ENCODE measurements at regions of chr11 and their contacts with region 1.

Region 1: DNA sequence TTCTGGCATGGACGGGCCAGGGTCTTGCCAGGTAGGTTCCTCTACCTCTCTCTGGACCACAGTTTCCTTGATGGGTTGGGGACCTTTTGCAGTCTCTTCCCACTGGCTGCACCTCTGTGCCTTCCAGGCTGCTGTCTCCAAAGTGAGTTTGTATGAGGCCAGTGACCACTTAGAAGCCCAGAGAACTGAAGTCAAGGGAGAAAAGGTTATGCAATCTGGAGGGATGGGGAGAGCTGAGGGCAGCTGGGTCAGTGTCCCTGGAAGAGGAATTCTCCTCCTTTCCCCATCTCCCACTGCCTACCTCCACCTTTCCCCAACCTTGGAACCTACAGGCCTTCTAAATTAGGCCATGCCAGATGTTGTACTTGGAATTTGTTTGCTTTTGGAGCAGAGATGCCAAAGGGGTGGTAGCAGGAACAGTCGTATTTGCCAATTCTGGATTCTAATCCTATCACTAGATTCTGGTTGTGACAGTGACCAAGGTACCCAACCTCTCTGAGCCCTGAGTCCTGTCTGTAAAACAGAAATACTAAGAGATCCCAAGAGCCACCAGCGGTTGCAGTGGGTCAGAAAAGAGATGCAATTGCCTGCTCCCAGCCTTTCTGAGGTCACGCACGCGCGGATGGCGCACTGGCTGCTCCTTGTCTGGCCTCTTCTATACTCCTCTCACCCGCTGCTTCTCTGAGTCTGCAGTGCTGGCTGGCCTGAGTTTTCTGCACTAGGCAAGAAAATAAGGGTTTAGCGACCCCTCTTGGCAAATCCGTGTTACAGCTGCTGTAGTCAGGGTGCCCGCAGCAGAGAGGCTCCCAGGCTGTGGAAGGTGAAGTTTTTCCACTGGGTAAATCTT is 10.7 kb upstream of the ACCSL start:
- DNase-seq: peak; percentile 54 to 55
- ATAC-seq: peak; percentile 81

Region 2: DNA sequence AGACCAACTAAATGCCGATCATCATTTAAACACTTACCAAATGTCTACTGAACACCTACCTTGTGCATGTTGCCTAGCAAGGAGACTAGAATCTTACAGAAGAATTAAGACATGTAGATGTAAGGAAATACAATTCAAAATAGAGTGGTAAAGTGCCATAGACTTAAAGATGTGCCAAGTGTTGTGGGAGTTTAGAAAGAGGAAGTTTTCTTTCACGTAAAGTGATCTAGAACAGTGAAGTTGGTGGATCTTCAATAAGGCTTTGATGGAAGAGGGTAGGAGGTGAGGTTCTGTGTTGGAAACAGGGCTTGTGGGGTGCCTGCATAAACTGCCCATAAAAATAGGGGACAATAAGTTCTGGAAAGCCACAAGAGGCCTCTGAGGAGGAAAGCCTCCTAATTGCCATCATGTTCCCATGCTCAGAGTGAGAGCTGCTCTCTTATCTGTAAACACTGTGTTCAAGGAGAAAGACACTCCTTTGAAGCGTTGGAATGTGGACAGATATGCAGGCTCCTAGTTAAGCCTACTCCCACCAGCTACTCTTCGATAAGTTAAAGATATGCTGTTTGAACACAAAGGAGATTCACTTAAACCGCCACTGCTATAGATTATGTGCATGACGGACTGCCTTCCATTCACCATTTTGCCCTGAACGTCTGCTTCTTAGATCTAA is 289.8 kb before region 1 on chr11:
- intact Hi-C with region 1: no loop called
- DNase-seq: no peak
- ATAC-seq: no peak

Region 3: DNA sequence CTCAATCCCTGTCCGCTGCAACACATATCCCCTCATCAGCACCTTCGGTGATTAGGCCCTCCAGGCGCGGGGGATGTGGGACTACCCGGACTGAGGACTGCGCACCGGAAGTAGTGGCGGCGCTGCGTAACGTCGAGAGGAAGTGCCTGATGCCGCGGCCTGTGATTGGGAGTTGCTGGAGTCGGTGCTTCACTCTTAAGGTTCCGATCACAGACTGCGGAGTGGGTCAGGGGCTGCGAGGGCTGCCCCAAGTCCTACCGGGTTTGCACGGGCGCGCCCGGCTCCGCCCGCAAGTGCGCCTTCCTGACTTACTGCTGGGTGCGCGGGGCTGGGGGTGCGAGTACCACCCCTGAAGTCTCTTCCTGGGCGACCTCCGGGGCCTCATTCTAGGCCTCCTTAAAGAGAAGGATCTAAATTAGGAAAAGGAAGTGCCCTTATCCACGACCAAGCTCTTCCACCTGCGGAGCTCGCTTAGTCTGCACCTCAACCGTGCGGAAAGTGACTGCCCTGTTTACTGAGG is 156.3 kb before region 1 on chr11 and contains the start of gene ALKBH3:
- intact Hi-C with region 1: loop called in 1 of 2 experiments (anchors 10 kb)
- DNase-seq: peak; percentile 88 to 93
- ATAC-seq: peak; percentile 100
- total RNA-seq, gene ALKBH3: 22.7 to 29.9 TPM

Region 4: GRCh38 chr11:43969543-43969942 is 67.5 kb before region 1 on chr11:
- intact Hi-C with region 1: no loop called
- DNase-seq: no peak
- ATAC-seq: no peak